ENCODE measurements at regions of chr1 and their contacts with region 1.

Region 1: GRCh38 chr1:184379111-184379946 is 7.5 kb upstream of the C1orf21 start:
- DNase-seq: no peak
- H3K4me3 ChIP-seq: no peak overlapping the region
- H3K27ac ChIP-seq: no peak overlapping the region
- H3K4me1 ChIP-seq: peaks cover 0 to 11% (median 6%) of the 10 kb centered on the region in 4 experiments; a peak in 6 of 7 replicates
- H3K27me3 ChIP-seq: no peaks in the 10 kb centered on the region
- CTCF ChIP-seq: peak in 2 of 3 experiments; percentile 47 to 64; a peak in 2 of 4 replicates
- EP300 ChIP-seq: no peak
- POLR2A ChIP-seq: no peak
- RAD21 ChIP-seq: peak; percentile 65 to 74

Region 2: DNA sequence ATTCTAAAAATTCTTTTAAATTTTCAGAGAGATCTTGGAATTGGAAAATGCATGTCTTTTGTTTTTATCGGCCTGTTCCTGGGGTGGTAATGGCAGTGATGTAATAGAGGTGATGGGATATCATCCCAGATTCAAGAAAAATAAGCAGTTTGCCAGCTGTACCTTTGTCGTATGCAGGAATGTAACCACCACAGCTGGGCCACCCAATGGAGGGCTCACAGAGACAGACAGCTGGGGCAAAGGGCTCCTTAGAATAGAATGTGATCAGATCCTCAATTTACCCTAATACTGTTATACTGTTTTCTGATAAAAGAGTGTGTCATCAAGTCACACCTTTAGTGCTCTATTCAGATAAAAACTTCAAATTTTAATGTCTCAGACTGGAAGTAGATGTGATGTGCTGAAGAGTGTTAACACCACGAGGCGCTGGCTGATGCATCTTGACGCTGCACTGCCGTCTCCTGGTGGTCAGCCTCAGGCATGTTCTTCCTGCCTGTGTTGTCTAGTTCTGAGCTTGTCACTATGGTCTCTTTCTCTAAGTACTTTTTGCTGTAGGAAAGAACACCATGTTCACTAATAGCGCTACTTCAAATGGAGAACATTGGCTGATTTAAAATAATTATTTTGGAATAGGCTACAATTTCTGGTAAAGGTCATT is 86.3 kb after region 1 on chr1:
- CTCF ChIA-PET with region 1: interaction called, 15 read pairs
- POLR2A ChIA-PET with region 1: no interaction called
- DNase-seq: no peak
- H3K4me3 ChIP-seq: no peak overlapping the region
- H3K27ac ChIP-seq: no peak overlapping the region
- H3K4me1 ChIP-seq: peaks cover 0 to 2% (median 0%) of the 10 kb centered on the region in 4 experiments; a peak in 1 of 7 replicates
- H3K27me3 ChIP-seq: no peaks in the 10 kb centered on the region
- CTCF ChIP-seq: peak; percentile 42 to 65 (median 51)
- EP300 ChIP-seq: no peak
- POLR2A ChIP-seq: no peak
- RAD21 ChIP-seq: peak; percentile 67 to 71

Region 3: DNA sequence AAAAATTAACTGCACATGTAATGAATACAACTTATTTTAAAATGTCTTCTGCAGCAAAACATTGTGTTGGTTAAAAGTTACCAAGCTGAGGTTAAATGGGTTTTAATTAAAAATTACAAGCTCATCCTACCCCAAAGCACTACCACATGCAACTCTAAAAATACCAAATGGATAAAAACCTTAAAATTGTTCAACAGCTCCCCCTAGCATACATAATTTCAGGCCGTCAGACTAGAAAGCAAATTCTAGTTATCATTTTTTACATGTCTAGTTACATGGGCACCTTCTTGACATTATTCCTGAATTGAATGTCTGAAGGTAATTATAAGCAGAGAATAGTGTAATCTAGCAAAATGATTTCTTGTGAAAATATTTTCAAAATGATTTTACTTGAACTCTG is 184.0 kb after region 1 on chr1:
- CTCF ChIA-PET with region 1: interaction called, 11 read pairs
- POLR2A ChIA-PET with region 1: no interaction called
- DNase-seq: no peak
- H3K4me3 ChIP-seq: no peak overlapping the region
- H3K27ac ChIP-seq: no peak overlapping the region
- H3K4me1 ChIP-seq: no peaks in the 10 kb centered on the region
- H3K27me3 ChIP-seq: no peaks in the 10 kb centered on the region
- CTCF ChIP-seq: peak in 2 of 3 experiments; percentile 19 to 30; a peak in 2 of 4 replicates
- EP300 ChIP-seq: no peak
- POLR2A ChIP-seq: no peak
- RAD21 ChIP-seq: peak; percentile 45 to 51